Mammary epithelial cell (primary cell): ENCODE measurements at regions of chr7 and their contacts with region 1.

Region 1: DNA sequence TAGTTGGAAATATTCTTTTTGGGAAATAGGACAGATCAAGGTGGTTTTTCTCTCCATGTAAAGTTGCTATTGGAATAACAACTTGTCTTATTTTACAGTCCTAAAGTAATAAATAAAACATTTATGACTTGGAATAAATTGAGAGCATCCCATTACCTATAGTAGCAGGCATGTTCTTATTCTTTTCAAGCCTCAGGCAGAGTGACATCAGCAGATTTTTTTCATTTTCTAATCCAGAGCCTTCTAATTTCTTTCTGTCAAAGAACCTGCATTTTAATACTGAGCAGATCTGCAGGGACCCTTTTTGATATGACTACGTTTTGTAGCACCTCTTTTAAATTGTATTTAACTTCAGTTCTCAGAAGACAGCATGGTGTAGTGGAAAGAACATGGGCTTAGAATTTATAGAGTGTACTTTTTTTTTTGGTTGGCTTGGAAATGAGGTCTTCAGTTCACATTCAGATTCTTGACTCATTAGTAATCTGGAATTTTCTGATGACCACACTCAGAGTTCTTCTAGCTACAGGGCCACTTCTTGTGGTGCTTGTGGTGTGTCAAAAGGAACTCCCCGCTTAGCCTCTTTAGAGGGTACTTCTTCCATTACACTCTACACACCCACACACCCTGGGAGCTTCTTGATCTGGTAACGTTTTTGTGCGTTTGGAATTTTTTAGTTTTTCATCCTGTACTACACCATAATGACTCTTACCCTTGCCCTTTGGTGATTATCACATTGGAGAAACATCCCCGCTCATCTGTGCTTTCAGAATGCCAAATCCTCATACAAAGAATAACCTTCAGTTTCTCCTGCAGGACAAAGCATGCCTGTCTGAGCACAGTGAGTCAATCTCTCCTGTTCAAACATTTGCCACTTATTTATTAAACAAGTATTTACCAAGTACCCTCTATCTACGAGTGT is 34.6 kb downstream of the AGK start:
- DNase-seq: peak; percentile 83
- H3K4me3 ChIP-seq: peak overlapping the region in 2 of 3 experiments; percentile 10 to 36
- H3K27ac ChIP-seq: peak overlapping the region; percentile 88
- H3K4me1 ChIP-seq: peaks cover 30% of the 10 kb centered on the region
- H3K27me3 ChIP-seq: no peaks in the 10 kb centered on the region
- CTCF ChIP-seq: no peak

Region 2: GRCh38 chr7:141288648-141289047 is 297.2 kb before region 1 on chr7:
- CTCF ChIA-PET with region 1: no interaction called
- dilution Hi-C with region 1: no loop called
- in situ Hi-C with region 1: no loop called
- intact Hi-C with region 1: no loop called
- DNase-seq: no peak
- H3K4me3 ChIP-seq: no peak overlapping the region
- H3K27ac ChIP-seq: no peak overlapping the region
- H3K4me1 ChIP-seq: no peaks in the 10 kb centered on the region
- H3K27me3 ChIP-seq: peaks cover 5% of the 10 kb centered on the region
- CTCF ChIP-seq: no peak

Region 3: GRCh38 chr7:141486959-141487358 is 98.9 kb before region 1 on chr7:
- CTCF ChIA-PET with region 1: no interaction called
- dilution Hi-C with region 1: no loop called
- in situ Hi-C with region 1: no loop called
- intact Hi-C with region 1: no loop called
- DNase-seq: no peak
- H3K4me3 ChIP-seq: no peak overlapping the region
- H3K27ac ChIP-seq: no peak overlapping the region
- H3K4me1 ChIP-seq: no peaks in the 10 kb centered on the region
- H3K27me3 ChIP-seq: peaks cover 1% of the 10 kb centered on the region
- CTCF ChIP-seq: no peak

Region 4: DNA sequence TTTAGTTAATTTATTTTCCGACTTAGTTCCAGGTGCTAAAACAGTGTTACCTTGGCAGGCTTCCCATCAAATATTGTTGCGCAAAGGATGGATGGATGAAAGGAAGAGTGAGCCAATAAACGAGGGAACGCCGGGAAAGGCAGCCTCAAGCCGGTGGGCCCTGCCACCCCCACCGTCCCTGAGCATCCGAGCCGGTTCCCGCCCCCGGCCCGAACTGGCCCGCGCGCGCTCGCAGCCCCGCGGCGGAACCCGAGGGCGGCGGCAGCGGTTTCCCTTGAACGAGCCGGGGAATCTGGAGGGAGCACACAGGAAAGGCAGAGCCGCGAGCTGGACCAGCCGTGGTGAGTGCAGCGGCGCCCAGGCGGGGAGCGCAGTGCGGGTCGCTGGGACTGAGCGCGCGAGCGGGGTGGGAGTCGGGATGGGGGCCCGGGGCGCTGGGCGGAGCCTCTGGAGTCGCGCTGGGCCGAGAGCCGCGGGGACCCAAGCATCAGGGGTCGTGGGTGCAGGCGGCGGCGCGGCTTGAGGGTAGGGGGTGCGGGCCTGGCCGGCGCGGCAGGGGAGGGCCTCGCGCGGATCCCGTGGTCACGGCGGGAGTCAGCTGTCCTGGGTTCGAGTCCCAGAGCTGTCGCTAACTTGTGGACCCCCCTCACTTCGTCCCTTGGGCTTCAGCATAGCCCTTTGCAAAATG is 34.6 kb before region 1 on chr7 and contains the start of gene AGK:
- CTCF ChIA-PET with region 1: no interaction called
- dilution Hi-C with region 1: no loop called
- in situ Hi-C with region 1: no loop called
- intact Hi-C with region 1: loop called (anchors 2 kb)
- DNase-seq: peak; percentile 66
- H3K4me3 ChIP-seq: peak within 1 kb of the TSS; percentile 65 to 97 (median 84)
- H3K27ac ChIP-seq: peak within 1 kb of the TSS; percentile 49
- H3K4me1 ChIP-seq: peaks cover 6% of the 10 kb centered on the region
- H3K27me3 ChIP-seq: no peaks in the 10 kb centered on the region
- CTCF ChIP-seq: no peak
- total RNA-seq, gene AGK: 26.2 to 34.7 TPM